ENCODE measurements at regions of chr15 and their contacts with region 1.

Region 1: DNA sequence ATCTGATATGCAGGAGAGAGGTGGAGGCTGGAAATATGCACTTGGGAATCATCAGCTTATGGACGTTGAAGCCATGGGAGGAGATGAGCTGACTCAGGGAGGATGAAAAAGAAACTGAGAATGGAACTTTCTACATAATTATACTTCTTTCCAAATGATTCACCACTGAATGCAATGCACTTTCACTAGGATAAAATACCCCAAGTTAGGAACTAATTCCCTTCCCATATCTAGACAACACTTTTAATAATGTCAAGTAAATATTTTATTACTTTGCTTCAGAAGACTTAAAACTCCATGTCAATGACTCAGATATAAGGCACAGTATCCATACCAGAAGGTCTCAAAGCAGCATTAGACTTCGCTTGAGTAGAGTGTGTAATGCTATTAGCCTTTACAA is 24.2 kb downstream of the NPTN start:
- DNase-seq: no peak
- ATAC-seq: peak; percentile 59
- H3K4me3 ChIP-seq: no peak overlapping the region
- H3K27ac ChIP-seq: 0 out of 2 replicates have a peak overlapping the region, but pooled peaks have one; percentile 16
- H3K4me1 ChIP-seq: peaks cover 27% of the 10 kb centered on the region; the same call in 1 of the 2 replicates
- H3K27me3 ChIP-seq: no peaks in the 10 kb centered on the region
- CTCF ChIP-seq: no peak
- EP300 ChIP-seq: no peak
- POLR2A ChIP-seq: no peak
- RAD21 ChIP-seq: no peak

Region 2: GRCh38 chr15:73593304-73594074 is 15.5 kb before region 1 on chr15:
- CTCF ChIA-PET with region 1: interaction called, 7 read pairs
- POLR2A ChIA-PET with region 1: interaction called, 4 read pairs
- RAD21 ChIA-PET with region 1: no interaction called
- SMC1A ChIA-PET with region 1: interaction called, 40 read pairs
- in situ Hi-C with region 1: no loop called
- intact Hi-C with region 1: no loop called
- DNase-seq: no peak
- ATAC-seq: no peak
- H3K4me3 ChIP-seq: no peak overlapping the region
- H3K27ac ChIP-seq: no peak overlapping the region
- H3K4me1 ChIP-seq: peaks cover 3% of the 10 kb centered on the region; the same call in 1 of the 2 replicates
- H3K27me3 ChIP-seq: no peaks in the 10 kb centered on the region
- CTCF ChIP-seq: no peak
- EP300 ChIP-seq: no peak
- POLR2A ChIP-seq: no peak
- RAD21 ChIP-seq: no peak

Region 3: DNA sequence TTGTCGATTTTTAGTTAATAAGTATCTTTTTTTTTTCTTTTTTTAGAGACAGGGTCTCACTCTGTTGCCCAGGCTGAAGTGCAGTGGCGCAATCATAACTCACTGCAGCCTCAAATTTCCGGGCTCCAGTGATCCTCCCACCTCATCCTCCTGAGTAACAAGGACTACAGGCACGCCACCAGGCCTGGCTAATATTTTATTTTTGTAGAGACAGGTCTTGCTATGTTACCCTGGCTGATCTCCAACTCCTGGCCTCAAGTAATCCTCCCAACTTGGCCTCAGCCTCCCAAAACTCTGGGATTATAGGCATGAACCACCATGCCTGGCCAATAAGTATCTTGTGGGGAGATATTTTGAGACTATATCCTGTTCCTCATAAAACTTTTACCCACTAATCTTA is 902.6 kb after region 1 on chr15:
- CTCF ChIA-PET with region 1: no interaction called
- POLR2A ChIA-PET with region 1: no interaction called
- RAD21 ChIA-PET with region 1: no interaction called
- SMC1A ChIA-PET with region 1: no interaction called
- in situ Hi-C with region 1: no loop called
- intact Hi-C with region 1: no loop called
- DNase-seq: no peak
- ATAC-seq: peak; percentile 80
- H3K4me3 ChIP-seq: no peak overlapping the region
- H3K27ac ChIP-seq: peak overlapping the region; percentile 75
- H3K4me1 ChIP-seq: peaks cover 14% of the 10 kb centered on the region
- H3K27me3 ChIP-seq: no peaks in the 10 kb centered on the region
- CTCF ChIP-seq: no peak
- EP300 ChIP-seq: no peak
- POLR2A ChIP-seq: no peak
- RAD21 ChIP-seq: no peak